Mammary epithelial cell (primary cell): ENCODE measurements at regions of chr9 and their contacts with region 1.

Region 1: DNA sequence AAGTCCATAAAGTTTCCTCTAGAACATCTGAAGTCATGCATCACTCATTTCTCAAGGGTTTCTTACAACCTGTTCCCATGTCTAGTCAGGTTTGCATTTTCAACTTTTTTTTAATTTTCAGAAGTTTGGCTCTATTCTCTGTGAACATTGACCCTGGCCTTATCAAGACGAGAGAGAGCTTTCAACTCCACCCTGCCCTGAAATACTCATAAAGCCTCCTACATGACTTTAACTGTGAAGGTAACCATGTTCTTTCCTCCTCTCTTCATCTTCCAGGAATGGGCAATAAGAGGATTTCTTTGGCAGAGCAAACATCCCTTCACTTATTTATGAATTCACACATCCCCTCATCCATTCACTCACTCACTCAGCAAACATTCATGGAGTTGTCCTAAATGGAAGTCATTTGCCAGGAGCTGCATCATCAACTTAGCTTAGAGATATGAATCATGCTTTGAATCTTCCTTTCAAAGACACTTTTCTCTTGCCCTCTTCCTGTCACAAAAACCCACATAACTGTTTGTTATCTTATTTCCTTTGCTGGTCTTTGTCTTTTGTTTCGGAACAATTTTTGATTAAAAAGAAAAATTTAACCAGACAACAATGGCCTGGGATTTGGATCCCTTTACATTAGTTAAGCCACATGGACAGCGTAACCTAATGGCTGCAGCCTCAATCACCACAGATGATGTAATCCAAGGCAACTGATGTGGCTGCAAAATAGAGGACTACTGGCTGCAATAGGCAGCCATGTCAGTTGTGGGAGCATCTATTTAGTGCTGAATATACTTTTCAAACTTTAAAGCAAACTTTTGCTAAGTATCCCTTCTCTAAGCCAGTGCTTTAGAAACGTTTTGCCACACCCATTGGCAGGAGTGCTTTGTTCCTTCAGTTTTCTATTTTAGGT is 43.0 kb upstream of the GNAQ start:
- DNase-seq: no peak
- H3K4me3 ChIP-seq: no peak overlapping the region
- H3K27ac ChIP-seq: no peak overlapping the region
- H3K4me1 ChIP-seq: no peaks in the 10 kb centered on the region
- H3K27me3 ChIP-seq: no peaks in the 10 kb centered on the region
- CTCF ChIP-seq: no peak

Region 2: DNA sequence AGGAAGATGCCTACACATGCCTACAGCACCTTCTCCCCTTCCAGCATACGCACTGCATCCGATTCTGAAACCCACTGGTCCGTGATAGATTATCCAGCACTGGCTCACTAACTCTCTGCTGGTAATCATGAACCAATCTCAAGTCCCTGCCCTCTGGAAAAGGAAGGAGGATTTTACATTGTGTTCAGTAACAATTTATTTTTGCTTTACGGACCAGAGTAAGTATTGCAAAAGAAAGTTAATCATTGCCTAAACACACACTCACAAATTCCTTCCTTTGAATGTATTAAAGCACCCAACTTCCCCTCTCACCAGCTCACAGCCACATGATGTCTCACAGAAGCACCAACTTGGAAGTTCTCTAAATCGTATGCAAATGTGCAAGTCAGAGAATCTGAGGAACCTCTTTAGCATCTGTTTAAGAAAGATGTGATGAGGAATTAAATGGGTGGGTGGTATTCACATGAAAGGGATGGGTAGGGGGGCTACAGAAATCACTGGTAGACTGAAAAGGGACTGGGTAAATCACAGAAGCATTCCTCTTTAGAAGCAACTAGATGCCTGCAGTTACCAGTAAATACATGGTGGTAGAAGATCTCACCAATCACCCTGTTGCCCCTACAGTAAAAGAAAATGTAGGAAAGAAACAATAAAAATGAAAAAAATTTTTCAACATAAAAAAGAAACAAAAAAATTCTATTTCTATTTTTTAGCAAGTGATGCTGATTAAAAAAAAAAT is 51.5 kb before region 1 on chr9:
- CTCF ChIA-PET with region 1: no interaction called
- dilution Hi-C with region 1: no loop called
- in situ Hi-C with region 1: no loop called
- intact Hi-C with region 1: no loop called
- DNase-seq: no peak
- H3K4me3 ChIP-seq: no peak overlapping the region
- H3K27ac ChIP-seq: no peak overlapping the region
- H3K4me1 ChIP-seq: peaks cover 19% of the 10 kb centered on the region
- H3K27me3 ChIP-seq: no peaks in the 10 kb centered on the region
- CTCF ChIP-seq: no peak

Region 3: DNA sequence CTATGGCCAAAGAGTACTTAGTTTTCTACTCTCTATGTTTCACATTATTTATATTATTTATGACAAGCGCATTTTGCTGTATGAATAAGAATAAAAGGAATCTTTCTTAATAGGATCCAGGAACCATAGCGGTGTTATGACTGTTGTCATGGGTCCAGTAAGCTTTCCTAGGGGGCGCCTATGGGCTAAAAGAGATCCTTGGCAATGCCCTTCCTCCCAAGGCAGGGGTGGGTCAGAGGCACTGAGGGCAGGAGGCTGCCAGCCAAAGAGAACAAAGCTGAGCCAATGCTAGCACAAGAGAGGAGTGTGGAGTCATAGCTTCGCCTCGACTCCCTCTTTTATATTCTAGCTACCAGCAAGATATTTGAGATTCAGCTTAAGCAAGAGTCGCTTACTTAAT is 55.4 kb after region 1 on chr9:
- CTCF ChIA-PET with region 1: no interaction called
- dilution Hi-C with region 1: no loop called
- in situ Hi-C with region 1: no loop called
- intact Hi-C with region 1: loop called (anchors 10 kb)
- DNase-seq: peak; percentile 69
- H3K4me3 ChIP-seq: no peak overlapping the region
- H3K27ac ChIP-seq: no peak overlapping the region
- H3K4me1 ChIP-seq: peaks cover 4% of the 10 kb centered on the region
- H3K27me3 ChIP-seq: no peaks in the 10 kb centered on the region
- CTCF ChIP-seq: peak in 1 of 2 donors; percentile 22

Region 4: DNA sequence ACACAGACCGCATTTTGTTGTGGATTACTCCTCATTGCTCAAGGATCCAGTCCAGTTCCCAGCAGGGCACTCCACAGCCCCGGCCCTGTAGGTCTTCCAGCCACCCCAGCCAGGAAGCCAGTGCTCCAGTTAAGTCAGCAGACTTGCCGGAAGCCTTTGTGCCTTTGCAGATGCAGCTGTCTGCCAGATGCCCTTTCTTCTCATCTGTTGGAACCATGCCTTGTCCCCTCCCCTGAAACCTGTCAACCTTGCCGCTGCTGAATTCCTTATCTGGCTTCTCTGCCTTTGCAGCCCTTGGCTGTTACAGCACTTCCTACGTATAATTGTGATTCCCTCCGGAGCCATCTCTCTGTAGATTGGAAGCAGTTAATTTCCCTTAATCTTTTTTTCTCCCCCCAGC is 250.7 kb after region 1 on chr9:
- CTCF ChIA-PET with region 1: no interaction called
- dilution Hi-C with region 1: no loop called
- in situ Hi-C with region 1: no loop called
- intact Hi-C with region 1: no loop called
- DNase-seq: no peak
- H3K4me3 ChIP-seq: no peak overlapping the region
- H3K27ac ChIP-seq: no peak overlapping the region
- H3K4me1 ChIP-seq: no peaks in the 10 kb centered on the region
- H3K27me3 ChIP-seq: no peaks in the 10 kb centered on the region
- CTCF ChIP-seq: no peak